ENCODE measurements at regions of chr17 and their contacts with region 1.

Region 1: DNA sequence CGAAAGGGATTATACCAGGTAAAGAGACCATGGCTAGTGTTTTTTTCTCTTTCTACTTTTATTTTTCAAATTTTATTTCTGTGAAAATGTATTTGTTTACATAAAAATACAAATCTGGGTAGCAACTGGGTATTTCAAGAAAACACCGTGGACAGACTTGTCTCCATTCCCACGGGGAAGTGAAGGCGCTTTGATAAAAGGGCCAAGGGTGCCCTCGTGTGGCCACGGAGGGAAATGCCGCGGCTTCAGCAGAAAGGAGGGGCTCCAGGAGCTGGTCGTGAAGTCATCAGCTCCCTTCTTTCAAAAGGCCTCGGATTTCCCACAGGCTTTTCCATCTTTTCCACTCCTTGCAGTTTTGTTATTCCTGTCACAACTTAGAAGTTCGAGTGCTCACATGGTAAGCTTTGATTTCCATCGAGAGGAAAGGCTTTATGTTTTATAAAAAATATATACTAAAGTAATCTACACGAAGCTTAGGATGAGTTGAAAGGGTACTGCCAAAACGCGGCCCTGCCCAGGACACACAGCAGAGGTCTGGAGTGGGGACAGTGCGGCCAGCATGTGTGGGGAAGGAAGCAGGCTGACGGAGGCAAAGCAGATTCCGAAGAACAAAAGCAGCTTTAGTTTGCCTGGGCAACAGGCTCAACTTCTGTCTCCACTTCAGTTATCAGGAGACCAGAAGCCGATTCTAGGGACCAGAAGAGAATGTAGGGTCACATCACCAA is 15.3 kb upstream of the MNT start:
- DNase-seq: no peak
- H3K4me3 ChIP-seq: no peak overlapping the region
- CTCF ChIP-seq: peak; percentile 92

Region 2: GRCh38 chr17:2347547-2348307 is 68.4 kb before region 1 on chr17:
- CTCF ChIA-PET with region 1: interaction called, 12 read pairs
- POLR2A ChIA-PET with region 1: no interaction called
- DNase-seq: peak; percentile 78
- H3K4me3 ChIP-seq: no peak overlapping the region
- CTCF ChIP-seq: no peak

Region 3: GRCh38 chr17:2369551-2370210 is 46.5 kb before region 1 on chr17:
- CTCF ChIA-PET with region 1: interaction called, 74 read pairs
- POLR2A ChIA-PET with region 1: no interaction called
- DNase-seq: no peak
- H3K4me3 ChIP-seq: no peak overlapping the region
- CTCF ChIP-seq: no peak

Region 4: DNA sequence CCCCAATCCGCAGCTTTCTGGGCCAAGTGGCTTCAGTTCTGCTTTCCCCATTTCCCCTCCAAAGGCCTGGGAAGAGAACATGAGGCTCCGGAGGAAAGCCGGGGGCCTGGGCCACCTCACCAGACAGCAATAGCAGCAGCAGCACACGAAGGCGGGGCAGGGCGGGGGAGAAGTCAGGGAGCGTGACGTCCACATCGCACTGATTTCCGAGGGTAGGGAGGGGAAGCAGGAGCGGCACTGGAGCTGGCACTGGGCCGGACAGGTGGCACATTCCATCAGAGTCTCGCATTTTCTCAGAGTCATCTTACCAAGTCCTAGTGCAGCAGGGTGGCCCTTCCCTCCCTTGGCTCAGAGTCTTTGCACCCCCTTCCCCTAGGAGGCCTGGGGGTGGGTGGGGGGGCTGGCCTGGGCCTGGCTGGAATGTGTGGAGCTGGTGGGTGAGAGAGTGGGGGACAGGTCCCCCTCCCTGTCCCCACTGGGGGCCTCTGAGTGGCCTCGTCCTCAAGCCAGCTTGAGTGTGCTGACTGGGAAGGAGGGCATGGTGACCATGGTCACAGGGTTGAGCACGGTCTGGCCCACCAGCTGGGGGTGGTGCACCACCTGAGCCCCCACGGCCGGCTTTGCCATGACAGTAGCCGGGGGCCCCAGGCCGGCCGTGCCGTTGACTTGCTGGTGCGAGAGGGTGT is 29.6 kb before region 1 on chr17:
- CTCF ChIA-PET with region 1: interaction called, 871 read pairs
- POLR2A ChIA-PET with region 1: interaction called, 17 read pairs
- DNase-seq: no peak
- H3K4me3 ChIP-seq: no peak overlapping the region
- CTCF ChIP-seq: no peak

Region 5: DNA sequence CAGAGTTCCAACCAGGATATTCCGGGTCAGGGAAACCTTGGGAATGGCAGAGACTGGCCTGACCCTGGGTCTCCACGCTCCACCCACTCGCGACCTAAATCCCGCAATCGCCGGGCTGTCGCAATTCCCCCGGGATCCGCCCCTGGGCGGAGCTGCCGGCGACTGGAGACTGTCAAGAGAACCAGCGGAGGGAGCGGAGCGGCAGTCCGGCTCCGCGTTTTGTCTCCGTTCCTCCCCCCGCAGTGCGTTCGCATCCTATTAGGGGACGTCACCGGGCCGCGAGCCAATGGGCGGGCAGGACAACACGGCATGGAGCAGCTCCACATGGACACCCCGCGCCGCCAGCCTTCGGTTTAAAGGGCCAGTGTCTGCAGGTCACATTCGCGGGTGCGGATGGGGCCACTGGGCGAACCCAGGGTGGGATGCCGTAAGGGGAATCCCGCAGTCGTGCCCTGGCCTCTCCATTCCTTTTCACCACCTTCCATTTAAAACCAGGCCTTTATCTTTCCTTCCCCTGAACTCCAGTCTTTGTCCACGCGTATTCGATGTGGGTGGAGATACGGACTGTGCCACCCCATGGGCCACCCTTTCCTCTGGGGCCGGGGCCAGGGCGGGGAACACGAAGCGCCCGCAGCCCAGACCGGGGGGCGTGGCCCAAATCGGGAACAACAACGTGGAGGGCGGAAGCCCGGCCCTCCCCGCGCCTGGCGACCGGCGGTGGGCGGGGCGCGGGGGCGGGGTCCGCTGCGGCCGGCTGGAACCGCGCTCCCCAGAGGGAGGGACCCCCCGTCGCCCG is 14.5 kb before region 1 on chr17:
- CTCF ChIA-PET with region 1: interaction called, 104 read pairs
- POLR2A ChIA-PET with region 1: interaction called, 4 read pairs
- DNase-seq: peak; percentile 97
- H3K4me3 ChIP-seq: peak overlapping the region; percentile 67
- CTCF ChIP-seq: no peak

Region 6: DNA sequence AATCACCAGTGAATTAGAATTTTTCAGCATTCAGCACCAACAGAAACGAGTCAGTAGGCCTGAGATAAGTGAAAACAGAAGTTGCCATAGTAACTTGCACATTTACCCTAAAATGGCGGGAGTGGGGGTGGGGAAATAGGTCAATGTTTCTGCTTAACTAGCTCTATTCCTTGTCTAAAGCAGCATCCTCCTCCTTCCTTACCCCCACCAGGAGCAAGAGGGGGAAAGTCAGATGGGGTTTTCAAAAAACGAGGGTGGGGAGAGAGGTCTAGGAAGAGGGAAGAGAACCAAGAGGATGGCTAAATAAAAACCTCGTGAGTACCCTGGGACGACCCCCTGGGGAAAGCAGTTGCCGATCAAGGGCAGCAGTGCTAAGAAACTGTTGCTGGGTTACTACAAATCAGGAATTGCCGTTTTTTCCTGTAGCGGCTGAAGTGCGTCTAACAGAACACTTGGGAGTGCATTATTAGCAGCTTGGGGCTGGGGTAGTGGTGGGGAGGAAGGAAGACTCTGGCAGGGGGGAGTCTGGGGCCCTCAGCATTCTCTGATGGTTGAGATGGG is 19.1 kb after region 1 on chr17:
- CTCF ChIA-PET with region 1: interaction called, 24 read pairs
- POLR2A ChIA-PET with region 1: no interaction called
- DNase-seq: no peak
- H3K4me3 ChIP-seq: no peak overlapping the region
- CTCF ChIP-seq: no peak